Mammary epithelial cell (primary cell): ENCODE measurements at regions of chr11 and their contacts with region 1.

Region 1: DNA sequence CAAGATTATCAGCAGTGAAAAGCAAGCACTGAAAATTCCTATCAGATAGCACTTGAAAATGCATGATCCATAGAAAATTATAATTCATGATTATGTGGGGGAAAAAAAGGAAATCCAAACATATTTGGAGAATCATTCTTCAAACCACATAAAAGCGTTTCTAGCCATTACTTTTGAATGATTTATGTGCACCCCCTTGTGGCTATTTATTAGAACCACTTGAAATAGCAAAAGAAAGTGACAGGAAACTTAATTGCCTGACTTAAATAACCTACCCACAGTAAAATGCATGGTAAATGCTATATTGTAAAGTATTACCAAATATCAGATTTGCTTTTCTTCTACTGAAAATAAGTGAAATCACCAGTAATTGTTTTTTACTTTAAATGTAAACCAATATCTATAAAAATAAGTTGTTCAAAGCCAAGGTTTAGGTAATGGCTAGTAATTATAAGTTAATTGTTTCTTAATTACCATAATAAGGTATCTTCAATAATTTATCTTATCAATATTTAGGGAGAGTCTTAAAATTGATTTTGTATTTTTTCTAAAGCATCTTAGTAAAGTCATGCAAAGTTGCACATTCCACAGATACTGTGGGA is 168.5 kb downstream of the ARHGAP42 start:
- DNase-seq: peak; percentile 36
- H3K4me3 ChIP-seq: no peak overlapping the region
- H3K27ac ChIP-seq: no peak overlapping the region
- H3K4me1 ChIP-seq: peaks cover 14% of the 10 kb centered on the region
- H3K27me3 ChIP-seq: no peaks in the 10 kb centered on the region
- CTCF ChIP-seq: peak; percentile 54 to 59

Region 2: GRCh38 chr11:100682247-100682969 is 173.2 kb before region 1 on chr11:
- CTCF ChIA-PET with region 1: no interaction called
- dilution Hi-C with region 1: no loop called
- in situ Hi-C with region 1: loop called (anchors 10 kb)
- intact Hi-C with region 1: loop called (anchors 1 kb)
- DNase-seq: peak; percentile 24
- H3K4me3 ChIP-seq: no peak overlapping the region
- H3K27ac ChIP-seq: no peak overlapping the region
- H3K4me1 ChIP-seq: peaks cover 32% of the 10 kb centered on the region
- H3K27me3 ChIP-seq: no peaks in the 10 kb centered on the region
- CTCF ChIP-seq: peak; percentile 29 to 53

Region 3: DNA sequence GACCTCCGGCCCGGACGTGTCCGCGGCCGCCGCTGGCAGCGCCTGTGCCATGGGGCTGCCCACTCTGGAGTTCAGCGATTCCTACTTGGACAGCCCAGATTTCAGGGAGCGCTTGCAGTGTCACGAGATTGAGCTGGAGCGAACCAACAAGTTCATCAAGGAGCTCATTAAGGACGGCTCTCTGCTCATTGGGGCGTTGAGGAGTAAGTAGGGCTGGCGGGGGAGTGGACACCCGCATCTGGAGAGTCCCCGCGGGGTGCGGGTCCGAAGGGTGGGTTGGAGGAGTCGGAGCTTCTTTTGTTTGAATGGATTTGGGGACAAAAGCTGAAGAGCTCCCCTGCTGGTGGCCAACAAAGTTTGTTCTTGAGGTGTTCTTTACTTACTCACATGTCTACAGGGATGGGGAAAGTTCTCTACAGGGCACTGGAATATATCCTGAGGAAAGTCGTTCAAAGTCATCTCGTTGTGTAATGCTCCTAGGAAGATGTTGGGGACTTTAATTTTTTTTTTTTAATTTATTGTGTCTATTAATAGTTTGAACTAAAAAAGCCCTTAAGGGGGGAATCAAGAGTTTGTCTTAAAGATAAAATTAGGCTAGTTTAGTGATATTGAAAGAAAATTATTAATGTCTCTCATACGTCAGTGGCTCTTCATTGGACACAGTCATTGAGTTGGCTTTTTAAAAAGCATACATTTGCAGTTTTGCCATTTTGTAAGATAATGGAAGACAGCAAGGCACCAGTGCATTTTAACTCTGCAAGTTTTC is 167.8 kb before region 1 on chr11:
- CTCF ChIA-PET with region 1: no interaction called
- dilution Hi-C with region 1: no loop called
- in situ Hi-C with region 1: loop called in 1 of 2 experiments (anchors 10 kb)
- intact Hi-C with region 1: loop called (anchors 1 kb)
- DNase-seq: peak; percentile 79
- H3K4me3 ChIP-seq: peak overlapping the region; percentile 50 to 78 (median 63)
- H3K27ac ChIP-seq: peak overlapping the region; percentile 67
- H3K4me1 ChIP-seq: peaks cover 36% of the 10 kb centered on the region
- H3K27me3 ChIP-seq: no peaks in the 10 kb centered on the region
- CTCF ChIP-seq: peak; percentile 68 to 69

Region 4: DNA sequence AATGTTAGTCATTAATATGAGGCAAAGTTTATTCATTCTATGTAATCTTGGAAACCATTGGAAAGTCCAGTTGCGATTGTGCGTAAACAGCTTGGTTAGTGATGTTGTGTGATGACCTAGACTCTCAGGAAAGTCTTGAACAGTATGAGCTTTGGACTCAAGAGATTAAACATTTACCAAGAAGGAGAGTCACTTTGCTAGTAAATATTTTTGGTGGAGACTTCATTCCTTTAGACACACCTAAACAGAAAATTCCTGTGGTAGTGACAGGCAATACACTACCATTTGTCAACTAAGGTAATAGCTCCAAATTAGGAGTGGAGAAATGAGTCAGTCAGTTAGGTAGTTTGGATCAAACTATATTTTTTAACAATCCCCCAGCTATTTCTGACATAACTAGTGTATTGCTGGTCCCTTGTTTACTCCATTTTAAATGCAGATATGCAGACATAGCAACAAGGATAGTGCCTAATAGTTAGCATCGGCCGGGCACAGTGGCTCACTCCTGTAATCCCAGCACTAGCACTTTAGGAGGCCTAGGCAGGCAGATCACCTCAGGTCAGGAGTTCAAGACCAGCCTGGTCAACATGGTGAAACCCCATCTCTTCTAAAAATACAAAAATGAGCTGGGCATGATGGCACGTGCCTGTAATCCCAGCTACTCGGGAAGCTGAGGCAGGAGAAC is 79.2 kb before region 1 on chr11:
- CTCF ChIA-PET with region 1: no interaction called
- dilution Hi-C with region 1: no loop called
- in situ Hi-C with region 1: loop called in 1 of 2 experiments (anchors 10 kb)
- intact Hi-C with region 1: loop called (anchors 2 kb)
- DNase-seq: peak; percentile 90
- H3K4me3 ChIP-seq: no peak overlapping the region
- H3K27ac ChIP-seq: peak overlapping the region; percentile 87
- H3K4me1 ChIP-seq: peaks cover 26% of the 10 kb centered on the region
- H3K27me3 ChIP-seq: no peaks in the 10 kb centered on the region
- CTCF ChIP-seq: no peak

Region 5: DNA sequence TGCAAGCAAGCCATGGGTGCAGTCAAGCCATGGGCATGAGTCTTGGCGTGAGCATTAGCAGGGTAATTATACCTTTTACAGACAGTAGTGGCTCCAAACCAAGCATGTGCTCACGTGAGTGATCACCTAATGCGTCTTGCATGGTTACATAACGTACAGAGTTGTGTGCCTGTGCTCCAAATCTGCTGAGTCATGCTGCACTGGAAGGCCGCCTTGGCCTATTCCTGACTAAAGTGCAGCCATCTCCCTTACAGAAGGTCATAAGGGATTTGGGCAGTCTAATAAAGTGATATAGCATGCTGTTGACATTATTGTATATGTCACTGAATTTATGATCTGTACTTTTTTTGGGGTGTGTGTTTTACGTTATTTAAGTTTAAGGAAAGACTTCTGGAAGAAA is 66.1 kb before region 1 on chr11:
- CTCF ChIA-PET with region 1: no interaction called
- dilution Hi-C with region 1: no loop called
- in situ Hi-C with region 1: no loop called
- intact Hi-C with region 1: no loop called
- DNase-seq: no peak
- H3K4me3 ChIP-seq: no peak overlapping the region
- H3K27ac ChIP-seq: no peak overlapping the region
- H3K4me1 ChIP-seq: peaks cover 4% of the 10 kb centered on the region
- H3K27me3 ChIP-seq: no peaks in the 10 kb centered on the region
- CTCF ChIP-seq: no peak

Region 6: GRCh38 chr11:100930185-100930778 is 74.7 kb after region 1 on chr11:
- CTCF ChIA-PET with region 1: no interaction called
- dilution Hi-C with region 1: no loop called
- in situ Hi-C with region 1: no loop called
- intact Hi-C with region 1: loop called (anchors 1 kb)
- DNase-seq: peak; percentile 50
- H3K4me3 ChIP-seq: no peak overlapping the region
- H3K27ac ChIP-seq: peak overlapping the region; percentile 58
- H3K4me1 ChIP-seq: peaks cover 17% of the 10 kb centered on the region
- H3K27me3 ChIP-seq: no peaks in the 10 kb centered on the region
- CTCF ChIP-seq: peak; percentile 61 to 64

Region 7: GRCh38 chr11:101516546-101516945 is 661.0 kb after region 1 on chr11:
- CTCF ChIA-PET with region 1: no interaction called
- dilution Hi-C with region 1: no loop called
- in situ Hi-C with region 1: no loop called
- intact Hi-C with region 1: no loop called
- DNase-seq: no peak
- H3K4me3 ChIP-seq: no peak overlapping the region
- H3K27ac ChIP-seq: no peak overlapping the region
- H3K4me1 ChIP-seq: no peaks in the 10 kb centered on the region
- H3K27me3 ChIP-seq: peaks cover 4% of the 10 kb centered on the region
- CTCF ChIP-seq: no peak